Endothelial cell of umbilical vein (primary cell): ENCODE measurements at regions of chr2 and their contacts with region 1.

Region 1: GRCh38 chr2:25228848-25229278 is 60.5 kb upstream of the POMC start:
- DNase-seq: peak; percentile 72
- H3K4me3 ChIP-seq: no peak overlapping the region
- H3K27ac ChIP-seq: no peak overlapping the region
- H3K4me1 ChIP-seq: no peaks in the 10 kb centered on the region
- H3K27me3 ChIP-seq: no peaks in the 10 kb centered on the region
- CTCF ChIP-seq: peak; percentile 68 to 85
- POLR2A ChIP-seq: no peak

Region 2: GRCh38 chr2:25165992-25166875 is 62.6 kb before region 1 on chr2:
- CTCF ChIA-PET with region 1: interaction called, 12 read pairs
- POLR2A ChIA-PET with region 1: no interaction called
- dilution Hi-C with region 1: no loop called
- intact Hi-C with region 1: no loop called
- DNase-seq: no peak
- H3K4me3 ChIP-seq: no peak overlapping the region
- H3K27ac ChIP-seq: no peak overlapping the region
- H3K4me1 ChIP-seq: peaks cover 2% of the 10 kb centered on the region
- H3K27me3 ChIP-seq: peaks cover 67 to 71% of the 10 kb centered on the region in 2 experiments
- CTCF ChIP-seq: peak in 1 of 2 donors; percentile 4
- POLR2A ChIP-seq: no peak

Region 3: DNA sequence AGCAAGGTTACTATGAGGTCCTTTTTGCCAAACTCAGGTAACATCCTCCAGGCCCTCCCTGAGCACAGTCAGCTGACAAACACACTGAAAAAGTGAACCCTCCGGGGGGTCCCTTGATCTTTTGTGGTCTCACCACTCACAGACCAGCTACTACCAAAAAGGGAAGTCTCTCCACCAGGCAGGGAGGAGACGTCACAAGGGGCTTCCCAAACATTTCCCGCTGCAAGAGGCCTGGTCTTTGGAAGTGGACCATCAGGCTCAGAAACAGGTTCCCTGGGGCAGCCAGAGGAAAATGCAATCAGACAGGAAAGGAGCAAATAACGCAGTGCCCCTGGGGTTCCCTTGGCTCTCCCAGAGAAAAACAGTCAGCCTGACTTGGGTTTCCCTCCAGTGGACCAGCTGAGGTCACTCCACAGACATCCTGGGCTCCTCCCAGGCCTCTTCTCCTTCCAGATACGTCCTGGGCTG is 21.8 kb before region 1 on chr2:
- CTCF ChIA-PET with region 1: interaction called, 11 read pairs
- POLR2A ChIA-PET with region 1: no interaction called
- dilution Hi-C with region 1: no loop called
- intact Hi-C with region 1: no loop called
- DNase-seq: no peak
- H3K4me3 ChIP-seq: no peak overlapping the region
- H3K27ac ChIP-seq: no peak overlapping the region
- H3K4me1 ChIP-seq: no peaks in the 10 kb centered on the region
- H3K27me3 ChIP-seq: no peaks in the 10 kb centered on the region
- CTCF ChIP-seq: no peak
- POLR2A ChIP-seq: no peak

Region 4: DNA sequence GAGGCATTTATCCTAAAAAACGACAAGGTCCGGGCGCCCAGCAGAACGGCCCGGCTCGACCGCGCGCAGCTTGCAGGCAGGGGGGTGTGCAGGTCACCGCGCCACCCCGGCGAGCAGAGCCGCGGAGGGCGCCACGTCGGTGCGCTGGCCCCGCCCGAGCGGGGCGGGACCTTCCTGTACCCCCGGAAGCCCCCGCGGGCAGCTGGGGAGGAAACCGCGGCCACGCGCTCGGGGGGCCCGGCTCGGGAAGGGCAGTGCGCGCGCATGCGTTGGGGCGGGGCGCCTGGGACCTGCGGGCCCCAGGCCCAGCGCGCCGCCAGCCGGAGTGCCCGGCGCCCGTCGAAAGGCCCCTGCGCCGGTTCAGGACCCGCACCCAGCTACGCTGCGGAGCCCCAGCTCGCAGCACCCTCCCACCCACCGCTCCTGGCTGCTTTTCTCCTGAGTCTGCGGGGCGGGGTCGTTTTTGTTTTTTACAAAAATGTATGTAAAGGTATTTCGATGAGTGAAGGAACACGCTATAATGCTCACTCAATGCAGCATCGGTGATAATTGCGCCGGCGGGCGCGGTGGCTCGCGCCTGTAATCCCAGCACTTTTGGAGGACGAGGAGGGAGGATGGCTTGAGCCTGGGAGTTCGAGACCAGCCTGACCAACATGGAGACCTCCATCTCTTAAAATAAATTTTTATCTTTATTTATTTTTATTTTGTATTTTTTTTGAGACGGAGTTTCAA is 12.7 kb before region 1 on chr2:
- CTCF ChIA-PET with region 1: interaction called, 14 read pairs
- POLR2A ChIA-PET with region 1: no interaction called
- dilution Hi-C with region 1: no loop called
- intact Hi-C with region 1: no loop called
- DNase-seq: peak; percentile 35
- H3K4me3 ChIP-seq: peak overlapping the region; percentile 36 to 65 (median 39)
- H3K27ac ChIP-seq: no peak overlapping the region
- H3K4me1 ChIP-seq: no peaks in the 10 kb centered on the region
- H3K27me3 ChIP-seq: no peaks in the 10 kb centered on the region
- CTCF ChIP-seq: no peak
- POLR2A ChIP-seq: peak; percentile 72

Region 5: DNA sequence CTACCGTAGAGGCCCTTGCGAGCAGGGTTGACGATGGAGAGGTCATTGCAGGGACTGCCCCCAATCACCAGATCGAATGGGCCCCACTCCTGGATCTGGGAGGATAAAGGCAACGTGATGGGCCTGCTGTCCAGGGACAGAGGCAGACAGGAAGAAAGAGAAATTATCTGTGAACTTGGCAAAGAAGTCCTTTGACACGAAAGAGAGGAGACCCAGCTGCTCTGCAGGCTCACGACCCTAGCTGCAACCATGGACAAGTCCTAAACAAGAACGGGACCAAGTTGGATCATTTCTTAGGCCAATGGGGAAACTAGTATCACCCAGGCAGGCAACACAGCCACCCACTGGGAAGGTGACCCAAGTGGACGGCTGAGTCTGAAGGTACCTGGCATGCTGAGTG is 11.8 kb after region 1 on chr2:
- CTCF ChIA-PET with region 1: interaction called, 14 read pairs
- POLR2A ChIA-PET with region 1: no interaction called
- dilution Hi-C with region 1: no loop called
- intact Hi-C with region 1: no loop called
- DNase-seq: no peak
- H3K4me3 ChIP-seq: no peak overlapping the region
- H3K27ac ChIP-seq: no peak overlapping the region
- H3K4me1 ChIP-seq: no peaks in the 10 kb centered on the region
- H3K27me3 ChIP-seq: no peaks in the 10 kb centered on the region
- CTCF ChIP-seq: no peak
- POLR2A ChIP-seq: no peak